ENCODE measurements at regions of chr16 and their contacts with region 1.

Region 1: GRCh38 chr16:57045694-57046381 is 46.5 kb upstream of the CPNE2 start:
- DNase-seq: no peak
- ATAC-seq: no peak
- H3K4me3 Mint-ChIP-seq: no peak overlapping the region
- H3K27ac Mint-ChIP-seq: no peak overlapping the region
- H3K4me1 Mint-ChIP-seq: peaks cover 40% of the 10 kb centered on the region
- H3K27me3 Mint-ChIP-seq: no peaks in the 10 kb centered on the region

Region 2: DNA sequence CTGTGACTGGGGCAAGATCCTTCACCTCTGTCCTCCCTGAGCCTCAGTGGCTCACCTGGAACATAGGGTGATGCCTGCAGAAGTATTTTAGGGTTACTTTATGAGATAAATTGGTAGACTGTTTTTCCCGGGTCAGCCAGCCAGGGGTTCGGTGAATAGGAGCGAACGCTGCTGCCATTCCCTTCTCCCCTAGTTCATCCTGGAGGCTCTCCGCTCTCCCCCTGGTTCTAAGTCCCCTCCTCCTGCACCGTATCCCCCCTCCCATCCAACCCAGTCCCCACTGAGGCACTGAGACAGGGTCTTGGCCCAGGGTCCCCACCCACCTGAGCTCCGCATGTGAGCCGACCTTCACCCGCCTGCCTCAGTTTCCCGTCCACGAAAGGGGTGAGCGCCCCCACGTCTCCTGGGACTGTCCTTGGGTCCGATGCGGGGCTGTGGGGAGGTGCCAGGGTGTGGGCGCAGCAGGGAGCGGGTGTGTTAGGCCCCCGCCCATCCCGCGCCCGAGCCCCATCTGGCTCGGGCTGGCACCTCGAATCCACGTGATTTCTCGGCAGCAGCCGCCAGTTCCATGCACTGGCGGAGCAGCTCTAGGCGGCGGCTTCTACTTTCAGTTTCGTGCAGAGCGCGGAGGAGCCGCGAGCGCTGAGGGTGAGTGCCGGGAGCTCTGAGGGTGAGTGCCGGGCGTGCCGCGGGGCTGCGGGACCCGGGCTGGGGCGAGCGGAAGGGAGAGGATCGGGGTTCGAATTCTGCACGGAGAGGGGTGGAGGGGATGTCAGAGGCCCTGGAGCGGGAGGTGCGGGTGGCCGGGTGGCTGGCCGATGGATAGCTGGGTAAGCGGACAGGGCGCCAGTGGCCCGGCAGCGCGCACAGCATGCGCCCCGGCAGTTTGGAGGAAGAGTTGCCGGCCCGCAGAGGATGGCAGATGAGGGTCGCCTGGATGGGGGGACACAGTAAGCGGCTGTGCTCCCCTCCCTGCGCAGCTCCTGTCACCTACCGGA is 56.6 kb before region 1 on chr16 and contains the start of gene NLRC5:
- CTCF ChIA-PET with region 1: interaction called, 23 read pairs
- DNase-seq: peak; percentile 95
- ATAC-seq: peak; percentile 88
- H3K4me3 Mint-ChIP-seq: peak within 1 kb of the TSS; percentile 99
- H3K27ac Mint-ChIP-seq: peak within 1 kb of the TSS; percentile 99
- H3K4me1 Mint-ChIP-seq: peaks cover 60% of the 10 kb centered on the region
- H3K27me3 Mint-ChIP-seq: no peaks in the 10 kb centered on the region
- total RNA-seq, gene NLRC5: 156 to 287 TPM

Region 3: GRCh38 chr16:57023541-57024249 is 22.1 kb before region 1 on chr16:
- CTCF ChIA-PET with region 1: interaction called, 16 read pairs
- DNase-seq: peak; percentile 69
- ATAC-seq: peak; percentile 62
- H3K4me3 Mint-ChIP-seq: no peak overlapping the region
- H3K27ac Mint-ChIP-seq: peak overlapping the region; percentile 70
- H3K4me1 Mint-ChIP-seq: peaks cover 58% of the 10 kb centered on the region
- H3K27me3 Mint-ChIP-seq: no peaks in the 10 kb centered on the region

Region 4: DNA sequence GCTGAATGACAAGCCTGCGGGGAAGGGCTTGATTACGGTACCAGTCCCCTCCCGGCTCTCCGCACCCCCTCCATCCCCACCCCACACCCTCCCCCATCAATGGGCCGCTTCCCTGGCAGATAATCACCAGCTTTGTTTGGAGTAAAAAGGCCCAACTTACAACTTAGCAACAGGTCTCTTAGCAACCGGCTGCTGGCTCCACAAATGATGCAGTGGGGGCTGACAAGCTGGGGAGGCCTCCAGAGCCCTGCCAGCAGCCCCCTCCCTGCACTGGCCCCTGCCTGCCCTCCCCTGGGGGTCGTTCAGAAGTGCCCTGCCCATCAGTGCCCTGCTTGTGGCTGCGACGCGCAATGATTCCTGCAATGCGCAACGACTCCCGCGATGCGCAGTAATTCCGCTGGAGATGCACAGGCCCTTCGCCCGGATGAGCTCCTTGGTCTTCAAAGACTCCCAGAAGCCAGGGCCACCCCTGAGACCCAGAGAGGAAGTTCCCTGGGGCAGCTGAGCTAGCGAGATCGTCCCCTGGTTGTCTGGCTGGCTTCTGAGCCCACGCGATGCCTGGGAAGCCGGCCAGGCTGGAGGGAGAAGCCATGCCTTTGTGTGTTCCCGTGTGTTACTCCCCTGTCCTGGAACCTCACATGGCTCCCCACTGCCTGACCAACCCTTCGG is 69.8 kb after region 1 on chr16:
- CTCF ChIA-PET with region 1: no interaction called
- DNase-seq: no peak
- ATAC-seq: no peak
- H3K4me3 Mint-ChIP-seq: no peak overlapping the region
- H3K27ac Mint-ChIP-seq: no peak overlapping the region
- H3K4me1 Mint-ChIP-seq: no peaks in the 10 kb centered on the region
- H3K27me3 Mint-ChIP-seq: no peaks in the 10 kb centered on the region